Panc1 (cell line): ENCODE measurements at regions of chr14 and their contacts with region 1.

Region 1: GRCh38 chr14:64109821-64110554 is 184.2 kb downstream of the ESR2 start:
- DNase-seq: no peak
- ATAC-seq: no peak
- H3K4me3 ChIP-seq: no peak overlapping the region
- H3K27ac ChIP-seq: no peak overlapping the region
- H3K4me1 ChIP-seq: no peaks in the 10 kb centered on the region
- H3K27me3 ChIP-seq: no peaks in the 10 kb centered on the region
- CTCF ChIP-seq: no peak

Region 2: GRCh38 chr14:64125270-64125669 is 15.3 kb after region 1 on chr14:
- CTCF ChIA-PET with region 1: no interaction called
- POLR2A ChIA-PET with region 1: interaction called, 15 read pairs
- in situ Hi-C with region 1: no loop called
- intact Hi-C with region 1: no loop called
- DNase-seq: no peak
- ATAC-seq: no peak
- H3K4me3 ChIP-seq: no peak overlapping the region
- H3K27ac ChIP-seq: no peak overlapping the region
- H3K4me1 ChIP-seq: no peaks in the 10 kb centered on the region
- H3K27me3 ChIP-seq: no peaks in the 10 kb centered on the region
- CTCF ChIP-seq: no peak